ENCODE measurements at regions of chr16 and their contacts with region 1.

Region 1: DNA sequence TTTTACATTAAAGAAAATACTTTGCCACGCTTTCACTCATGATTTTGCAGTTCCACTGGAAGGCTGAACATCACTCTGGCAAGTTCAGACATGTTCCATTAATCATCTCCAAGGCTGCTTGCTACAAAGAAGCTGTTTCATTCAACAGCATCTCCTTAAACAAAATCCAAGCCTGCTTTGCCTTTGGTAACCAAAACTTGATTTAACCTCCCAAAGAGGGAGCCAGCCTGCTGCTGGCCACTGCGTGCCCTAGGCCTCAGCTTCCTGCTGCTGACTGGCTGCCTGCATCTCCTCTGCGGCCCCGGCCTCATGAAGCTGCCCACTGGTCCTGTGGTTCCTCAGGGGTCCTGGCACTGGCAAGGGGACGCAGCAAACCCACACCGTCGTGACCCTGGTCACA is 31.8 kb downstream of the ANKRD11 start:
- DNase-seq: no peak
- ATAC-seq: no peak
- H3K4me3 Mint-ChIP-seq: peak overlapping the region in 5 of 10 donors; percentile 15 to 37 (median 24)
- H3K27ac Mint-ChIP-seq: peak overlapping the region in 9 of 10 donors; percentile 7 to 80 (median 56)
- H3K4me1 Mint-ChIP-seq: peaks cover 34 to 74% (median 66%) of the 10 kb centered on the region in 4 donors
- H3K27me3 Mint-ChIP-seq: no peaks in the 10 kb centered on the region

Region 2: GRCh38 chr16:89442990-89443731 is 15.4 kb before region 1 on chr16:
- POLR2A ChIA-PET with region 1: interaction called, 12 read pairs
- DNase-seq: no peak
- ATAC-seq: peak; percentile 12 to 24
- H3K4me3 Mint-ChIP-seq: peak overlapping the region; percentile 56 to 85 (median 78)
- H3K27ac Mint-ChIP-seq: peak overlapping the region; percentile 14 to 94 (median 90)
- H3K4me1 Mint-ChIP-seq: peaks cover 63 to 95% (median 94%) of the 10 kb centered on the region in 4 donors
- H3K27me3 Mint-ChIP-seq: no peaks in the 10 kb centered on the region